ENCODE measurements at regions of chr15 and their contacts with region 1.

Region 1: DNA sequence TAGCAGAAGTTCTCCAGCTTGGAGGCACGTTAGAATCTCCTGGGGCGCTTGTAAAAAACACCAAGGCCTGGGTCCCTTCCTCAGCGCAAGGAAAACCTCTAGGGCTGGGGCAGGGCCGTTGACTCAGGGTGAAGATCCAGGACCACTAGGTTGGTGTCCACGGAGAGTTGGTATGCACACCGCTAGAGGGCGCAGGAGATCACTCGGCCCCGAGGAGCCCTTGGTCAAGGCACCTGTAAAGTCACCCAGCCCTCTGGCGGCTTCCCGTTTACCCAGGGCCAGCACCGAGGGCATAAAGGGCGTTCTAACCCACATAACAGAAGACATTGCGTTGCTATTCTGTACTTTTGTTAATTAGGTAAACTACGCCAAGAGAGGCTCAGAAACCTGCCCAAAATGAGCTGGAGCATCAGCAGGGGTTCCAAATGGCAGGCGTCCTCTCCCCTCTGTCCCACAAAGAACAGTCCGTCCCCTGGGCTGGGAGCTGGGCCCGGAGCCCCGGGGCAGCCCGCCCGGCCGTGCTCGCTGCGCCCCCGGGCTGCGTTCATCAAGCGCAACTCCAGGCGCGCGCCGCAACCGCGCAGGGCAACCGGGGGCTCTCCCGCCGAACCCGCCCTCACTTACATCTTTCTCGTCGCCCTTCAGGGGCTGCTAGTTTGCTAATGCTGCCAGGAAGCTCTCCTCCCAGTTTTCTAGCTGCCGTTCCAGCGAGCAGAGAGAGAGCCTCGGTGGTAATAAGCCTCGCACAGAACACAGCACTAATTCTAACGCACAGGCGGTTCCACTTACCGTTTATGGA is 332.1 kb downstream of the ARRDC4 start:
- DNase-seq: peak; percentile 54 to 93
- H3K4me3 ChIP-seq: peak overlapping the region; percentile 32 to 70 (median 34)
- H3K27ac ChIP-seq: no peak overlapping the region
- H3K4me1 ChIP-seq: no peaks in the 10 kb centered on the region; a peak in 2 of 7 replicates
- H3K27me3 ChIP-seq: peaks cover 0 to 13% (median 9%) of the 10 kb centered on the region in 4 experiments; a peak in 6 of 7 replicates
- CTCF ChIP-seq: peak; percentile 94 to 96 (median 94)
- EP300 ChIP-seq: no peak
- POLR2A ChIP-seq: no peak
- RAD21 ChIP-seq: peak; percentile 53 to 66

Region 2: DNA sequence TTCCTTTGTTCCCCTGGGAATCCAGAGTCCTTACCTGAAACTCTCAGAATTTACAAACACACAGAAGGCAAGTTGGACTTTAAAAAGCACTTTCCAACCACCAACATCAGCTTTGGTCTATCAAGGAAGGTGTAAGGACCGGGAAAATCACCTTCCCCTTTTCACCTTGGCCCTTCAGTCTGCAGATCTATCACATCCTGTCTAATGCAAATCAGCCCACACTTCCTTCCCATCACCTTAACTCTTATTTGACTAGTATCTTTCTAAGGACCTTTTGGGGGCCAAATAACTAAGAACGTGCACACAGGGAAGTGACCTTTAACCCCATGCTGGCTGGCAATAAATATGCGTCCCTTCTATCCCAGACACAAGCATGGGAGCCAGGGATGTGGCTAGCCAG is 11.5 kb before region 1 on chr15:
- CTCF ChIA-PET with region 1: interaction called, 15 read pairs
- POLR2A ChIA-PET with region 1: interaction called, 3 read pairs
- DNase-seq: no peak
- H3K4me3 ChIP-seq: no peak overlapping the region
- H3K27ac ChIP-seq: no peak overlapping the region
- H3K4me1 ChIP-seq: no peaks in the 10 kb centered on the region
- H3K27me3 ChIP-seq: no peaks in the 10 kb centered on the region
- CTCF ChIP-seq: no peak
- EP300 ChIP-seq: no peak
- POLR2A ChIP-seq: no peak
- RAD21 ChIP-seq: no peak

Region 3: GRCh38 chr15:98413933-98414546 is 121.4 kb after region 1 on chr15:
- CTCF ChIA-PET with region 1: interaction called, 14 read pairs
- POLR2A ChIA-PET with region 1: no interaction called
- DNase-seq: no peak
- H3K4me3 ChIP-seq: no peak overlapping the region
- H3K27ac ChIP-seq: no peak overlapping the region
- H3K4me1 ChIP-seq: 0 out of 7 replicates have a peak, but pooled peaks cover 0 to 3% (median 0%) of the 10 kb centered on the region in 4 experiments
- H3K27me3 ChIP-seq: no peaks in the 10 kb centered on the region
- CTCF ChIP-seq: no peak
- EP300 ChIP-seq: no peak
- POLR2A ChIP-seq: no peak
- RAD21 ChIP-seq: no peak

Region 4: DNA sequence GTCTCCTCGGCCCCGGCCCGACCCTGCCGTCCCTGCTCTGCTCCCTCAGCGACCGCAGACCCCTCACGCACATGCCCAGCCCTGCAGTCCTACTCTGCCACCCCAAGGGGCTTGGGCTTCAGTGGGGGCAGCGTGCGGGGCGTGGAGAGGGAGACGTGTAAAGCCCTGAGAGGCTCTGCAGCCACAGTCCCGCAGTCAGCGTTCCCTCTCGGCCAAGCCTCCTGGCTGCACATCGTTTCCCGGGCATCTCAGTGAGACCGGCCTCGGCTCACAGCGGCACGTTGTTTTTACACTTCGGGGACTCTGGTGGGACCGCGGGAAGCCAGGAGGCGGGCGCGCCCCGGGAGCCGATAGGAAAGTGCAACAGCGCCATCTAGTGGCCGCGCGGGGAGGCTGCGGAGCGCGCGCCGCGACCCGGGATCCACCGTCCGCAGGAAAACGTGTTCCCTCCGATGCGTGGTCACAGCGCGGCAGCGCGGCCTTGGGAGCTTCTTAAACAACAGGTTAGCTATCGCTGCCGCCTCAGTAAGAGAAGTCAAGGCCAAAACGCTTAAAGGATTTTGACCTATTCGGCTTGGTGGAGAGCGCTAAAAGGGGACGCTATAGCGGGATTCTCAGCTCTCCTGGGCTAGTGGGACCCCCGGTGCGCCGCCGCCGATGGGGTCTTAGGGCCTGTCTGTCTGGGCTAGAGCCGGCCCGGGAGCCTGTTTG is 128.9 kb after region 1 on chr15:
- CTCF ChIA-PET with region 1: interaction called, 14 read pairs
- POLR2A ChIA-PET with region 1: no interaction called
- DNase-seq: peak; percentile 39 to 96
- H3K4me3 ChIP-seq: peak overlapping the region in 3 of 4 experiments; percentile 40 to 57 (median 54); a peak in 7 of 8 replicates
- H3K27ac ChIP-seq: no peak overlapping the region
- H3K4me1 ChIP-seq: peaks cover 0 to 6% (median 3%) of the 10 kb centered on the region in 4 experiments; a peak in 4 of 7 replicates
- H3K27me3 ChIP-seq: peaks cover 13 to 35% (median 28%) of the 10 kb centered on the region in 4 experiments
- CTCF ChIP-seq: peak; percentile 87 to 92 (median 88)
- EP300 ChIP-seq: no peak
- POLR2A ChIP-seq: no peak
- RAD21 ChIP-seq: peak; percentile 95 to 97

Region 5: GRCh38 chr15:98428253-98428989 is 135.8 kb after region 1 on chr15:
- CTCF ChIA-PET with region 1: interaction called, 11 read pairs
- POLR2A ChIA-PET with region 1: no interaction called
- DNase-seq: peak; percentile 49 to 97
- H3K4me3 ChIP-seq: peak overlapping the region; percentile 11 to 54 (median 24); a peak in 5 of 8 replicates
- H3K27ac ChIP-seq: no peak overlapping the region
- H3K4me1 ChIP-seq: peaks cover 0 to 2% (median under 1%) of the 10 kb centered on the region in 4 experiments; a peak in 2 of 7 replicates
- H3K27me3 ChIP-seq: peaks cover 3 to 26% (median 18%) of the 10 kb centered on the region in 4 experiments
- CTCF ChIP-seq: peak; percentile 63 to 90 (median 66)
- EP300 ChIP-seq: no peak
- POLR2A ChIP-seq: no peak
- RAD21 ChIP-seq: peak; percentile 72 to 87